ENCODE measurements at regions of chr9 and their contacts with region 1.

Region 1: DNA sequence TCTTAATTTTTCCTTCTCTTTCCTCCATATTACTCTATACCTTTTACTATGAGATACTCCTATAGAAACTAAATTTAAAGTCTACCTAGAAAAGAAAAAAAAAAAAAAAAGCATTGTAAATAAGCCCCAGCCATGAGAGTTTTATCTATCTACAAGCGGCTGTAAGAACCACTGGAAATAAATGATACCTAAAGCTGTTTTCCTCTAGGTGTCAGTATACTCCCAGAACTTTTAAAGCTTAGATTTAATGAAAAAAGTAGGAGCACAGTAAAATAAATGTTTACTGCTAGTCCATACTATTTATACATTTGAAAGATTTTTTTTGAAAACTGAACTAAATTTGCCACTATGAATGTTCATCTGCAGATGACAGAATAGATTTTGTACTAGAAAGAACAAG is 26.2 kb downstream of the TYRP1 start:
- DNase-seq: peak; percentile 69
- ATAC-seq: peak; percentile 71
- H3K4me3 ChIP-seq: no peak overlapping the region
- H3K27ac ChIP-seq: no peak overlapping the region
- H3K4me1 ChIP-seq: no peaks in the 10 kb centered on the region
- H3K27me3 ChIP-seq: no peaks in the 10 kb centered on the region
- CTCF ChIP-seq: peak; percentile 71
- POLR2A ChIP-seq: no peak
- RAD21 ChIP-seq: peak; percentile 65

Region 2: GRCh38 chr9:12775679-12776512 is 56.5 kb after region 1 on chr9:
- CTCF ChIA-PET with region 1: interaction called, 4 read pairs
- POLR2A ChIA-PET with region 1: no interaction called
- dilution Hi-C with region 1: no loop called
- in situ Hi-C with region 1: no loop called
- intact Hi-C with region 1: loop called (anchors 1 kb)
- DNase-seq: peak; percentile 89
- ATAC-seq: peak; percentile 84
- H3K4me3 ChIP-seq: peak overlapping the region; percentile 91
- H3K27ac ChIP-seq: peak overlapping the region; percentile 96
- H3K4me1 ChIP-seq: peaks cover 5% of the 10 kb centered on the region
- H3K27me3 ChIP-seq: no peaks in the 10 kb centered on the region
- CTCF ChIP-seq: peak; percentile 53
- POLR2A ChIP-seq: peak; percentile 45; the same call in 1 of the 2 replicates
- RAD21 ChIP-seq: peak; percentile 64; the same call in 1 of the 2 replicates

Region 3: DNA sequence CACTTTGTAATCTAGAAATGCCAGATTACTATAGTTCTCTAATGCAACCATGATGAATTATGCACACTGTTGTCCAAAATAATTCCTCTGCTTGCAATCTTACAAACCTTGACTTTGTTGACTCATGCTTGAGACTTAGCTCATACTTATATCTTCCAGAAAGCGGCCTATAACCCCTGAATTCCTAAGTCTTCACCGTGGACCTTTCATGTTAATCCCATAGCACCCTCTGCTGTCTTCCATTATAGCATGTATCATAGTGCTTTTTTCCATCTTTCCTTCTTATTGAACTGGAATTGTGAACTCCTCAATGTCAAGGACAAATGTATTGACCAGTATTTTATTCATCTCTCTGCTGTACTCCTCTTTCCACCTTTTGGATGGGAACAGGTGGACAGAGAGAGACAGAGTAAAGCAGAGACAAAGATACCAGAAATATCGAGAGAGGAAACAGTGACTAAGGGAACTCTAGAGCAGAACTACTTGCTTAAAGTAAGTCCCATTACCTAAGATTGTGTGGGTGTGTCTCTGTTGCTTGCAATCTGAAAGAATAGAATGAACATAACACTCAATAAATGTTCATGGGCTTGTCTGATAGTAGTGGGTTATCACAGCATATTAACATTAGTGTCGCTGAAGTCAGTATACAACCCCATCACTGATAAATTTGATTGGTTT is 165.4 kb after region 1 on chr9:
- CTCF ChIA-PET with region 1: interaction called, 7 read pairs
- POLR2A ChIA-PET with region 1: no interaction called
- dilution Hi-C with region 1: no loop called
- in situ Hi-C with region 1: loop called (anchors 5 kb)
- intact Hi-C with region 1: loop called (anchors 1 kb)
- DNase-seq: peak; percentile 88
- ATAC-seq: peak; percentile 71
- H3K4me3 ChIP-seq: no peak overlapping the region
- H3K27ac ChIP-seq: no peak overlapping the region
- H3K4me1 ChIP-seq: peaks cover 7% of the 10 kb centered on the region
- H3K27me3 ChIP-seq: no peaks in the 10 kb centered on the region
- CTCF ChIP-seq: peak; percentile 79
- POLR2A ChIP-seq: no peak
- RAD21 ChIP-seq: peak; percentile 90

Region 4: GRCh38 chr9:13088720-13089427 is 369.4 kb after region 1 on chr9:
- CTCF ChIA-PET with region 1: interaction called, 7 read pairs
- POLR2A ChIA-PET with region 1: no interaction called
- dilution Hi-C with region 1: no loop called
- in situ Hi-C with region 1: loop called (anchors 5 kb)
- intact Hi-C with region 1: loop called (anchors 1 kb)
- DNase-seq: peak; percentile 57
- ATAC-seq: peak; percentile 85
- H3K4me3 ChIP-seq: peak overlapping the region; percentile 38; the same call in 1 of the 2 replicates
- H3K27ac ChIP-seq: no peak overlapping the region
- H3K4me1 ChIP-seq: no peaks in the 10 kb centered on the region
- H3K27me3 ChIP-seq: no peaks in the 10 kb centered on the region
- CTCF ChIP-seq: peak; percentile 67
- POLR2A ChIP-seq: no peak
- RAD21 ChIP-seq: peak; percentile 66

Region 5: GRCh38 chr9:13252852-13253251 is 533.4 kb after region 1 on chr9:
- CTCF ChIA-PET with region 1: no interaction called
- POLR2A ChIA-PET with region 1: no interaction called
- dilution Hi-C with region 1: no loop called
- in situ Hi-C with region 1: no loop called
- intact Hi-C with region 1: no loop called
- DNase-seq: no peak
- ATAC-seq: no peak
- H3K4me3 ChIP-seq: no peak overlapping the region
- H3K27ac ChIP-seq: no peak overlapping the region
- H3K4me1 ChIP-seq: peaks cover 2% of the 10 kb centered on the region; the same call in 1 of the 2 replicates
- H3K27me3 ChIP-seq: no peaks in the 10 kb centered on the region
- CTCF ChIP-seq: no peak
- POLR2A ChIP-seq: no peak
- RAD21 ChIP-seq: no peak

Region 6: DNA sequence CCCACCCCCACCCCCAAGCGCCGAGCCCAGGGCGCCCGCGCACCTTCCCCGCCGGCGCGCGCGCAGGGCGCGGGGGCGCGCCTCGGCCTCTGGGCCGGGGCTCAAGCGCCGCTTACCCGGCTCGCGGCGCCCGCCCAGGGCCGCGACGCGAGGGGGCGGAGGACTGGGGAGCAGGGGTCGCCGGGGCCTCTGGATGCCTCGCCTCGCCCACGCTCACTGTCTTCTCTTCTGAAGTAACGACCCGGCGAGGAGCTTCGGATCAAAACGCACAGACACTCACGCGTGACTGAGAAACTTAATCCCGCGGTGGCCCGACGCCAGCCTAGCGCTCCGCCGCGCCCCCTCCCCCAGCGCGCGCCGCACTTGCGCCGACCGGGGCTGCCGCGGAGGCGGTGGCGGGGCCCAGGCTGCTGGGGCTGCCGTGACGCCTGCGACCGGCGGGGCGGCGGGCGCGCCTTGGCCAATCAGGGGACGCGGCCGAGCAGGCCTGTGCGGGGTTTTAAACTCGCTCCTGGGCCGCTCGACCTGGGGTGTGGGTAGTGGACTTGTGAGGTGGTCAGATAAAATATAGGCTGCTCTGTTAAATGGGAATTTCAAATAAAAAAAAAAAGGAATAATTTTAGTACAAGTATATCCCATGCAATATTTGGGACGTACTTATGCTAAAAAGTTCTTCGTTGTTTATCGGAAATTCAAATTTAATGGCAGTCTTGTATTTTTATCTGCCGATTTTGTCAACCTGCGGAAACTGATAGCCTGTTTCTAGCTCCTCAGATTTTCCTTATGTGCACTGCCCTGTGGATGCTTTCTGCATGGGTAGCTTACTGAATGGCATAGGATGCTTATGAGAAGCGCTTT is 560.1 kb after region 1 on chr9 and contains the start of gene MPDZ:
- CTCF ChIA-PET with region 1: no interaction called
- POLR2A ChIA-PET with region 1: no interaction called
- dilution Hi-C with region 1: no loop called
- in situ Hi-C with region 1: no loop called
- intact Hi-C with region 1: no loop called
- DNase-seq: peak; percentile 66
- ATAC-seq: peak; percentile 76
- H3K4me3 ChIP-seq: peak within 1 kb of the TSS; percentile 66
- H3K27ac ChIP-seq: peak within 1 kb of the TSS; percentile 99
- H3K4me1 ChIP-seq: peaks cover 16% of the 10 kb centered on the region
- H3K27me3 ChIP-seq: no peaks in the 10 kb centered on the region
- CTCF ChIP-seq: no peak
- POLR2A ChIP-seq: no peak
- RAD21 ChIP-seq: no peak
- total RNA-seq, gene MPDZ: 39.3 and 46.4 TPM in 2 replicates

Region 7: GRCh38 chr9:13427587-13427986 is 708.2 kb after region 1 on chr9:
- CTCF ChIA-PET with region 1: no interaction called
- POLR2A ChIA-PET with region 1: no interaction called
- dilution Hi-C with region 1: no loop called
- in situ Hi-C with region 1: no loop called
- intact Hi-C with region 1: loop called (anchors 5 kb)
- DNase-seq: peak; percentile 50
- ATAC-seq: peak; percentile 42; the same call in 1 of the 2 replicates
- H3K4me3 ChIP-seq: no peak overlapping the region
- H3K27ac ChIP-seq: no peak overlapping the region
- H3K4me1 ChIP-seq: no peaks in the 10 kb centered on the region
- H3K27me3 ChIP-seq: peaks cover 15% of the 10 kb centered on the region
- CTCF ChIP-seq: peak; percentile 71
- POLR2A ChIP-seq: no peak
- RAD21 ChIP-seq: peak; percentile 77